ENCODE measurements at regions of chr10 and their contacts with region 1.

Region 1: GRCh38 chr10:13776861-13777311 is 190.1 kb downstream of the PRPF18 start:
- DNase-seq: peak; percentile 61
- H3K4me3 ChIP-seq: no peak overlapping the region
- H3K27ac ChIP-seq: peak overlapping the region; percentile 65
- H3K4me1 ChIP-seq: peaks cover 45% of the 10 kb centered on the region
- H3K27me3 ChIP-seq: no peaks in the 10 kb centered on the region
- CTCF ChIP-seq: no peak

Region 2: DNA sequence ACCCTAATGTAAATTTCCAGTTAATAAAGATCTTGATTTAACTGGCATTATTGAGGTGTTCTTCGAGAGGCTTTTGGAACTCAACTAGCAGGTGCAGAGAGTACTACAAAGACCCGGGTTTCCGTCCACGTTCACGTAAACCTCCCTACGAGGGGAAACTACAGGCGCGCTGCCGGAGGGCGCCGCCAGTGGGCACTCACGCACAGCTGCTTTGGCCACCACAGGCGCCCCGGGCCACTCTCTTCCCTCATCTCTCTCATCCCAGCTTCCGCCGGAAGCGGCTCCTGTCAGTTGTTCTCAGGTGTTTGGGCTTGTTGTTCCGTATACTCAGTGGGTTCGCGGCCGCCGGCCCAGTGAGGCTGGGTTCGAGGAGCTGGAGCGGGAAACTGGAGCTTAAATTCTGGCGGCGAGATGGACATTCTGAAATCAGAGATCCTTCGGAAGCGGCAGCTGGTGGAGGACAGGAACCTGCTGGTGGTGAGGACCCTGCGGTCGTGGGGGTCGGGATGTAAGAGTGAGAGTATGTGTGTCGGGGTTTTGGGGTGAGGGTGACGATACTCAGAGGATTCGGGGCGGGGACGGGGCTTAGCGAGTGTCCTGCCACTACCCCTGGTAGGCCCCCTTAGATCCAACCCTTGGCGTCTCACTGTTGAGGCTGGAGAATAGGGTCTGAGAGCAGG is 190.1 kb before region 1 on chr10 and contains the start of gene PRPF18:
- CTCF ChIA-PET with region 1: no interaction called
- dilution Hi-C with region 1: no loop called
- in situ Hi-C with region 1: no loop called
- intact Hi-C with region 1: loop called (anchors 1 kb)
- DNase-seq: peak; percentile 89
- H3K4me3 ChIP-seq: peak within 1 kb of the TSS; percentile 94 to 96 (median 94)
- H3K27ac ChIP-seq: peak within 1 kb of the TSS; percentile 73
- H3K4me1 ChIP-seq: peaks cover 4% of the 10 kb centered on the region
- H3K27me3 ChIP-seq: no peaks in the 10 kb centered on the region
- CTCF ChIP-seq: peak; percentile 92 to 97
- total RNA-seq, gene PRPF18: 22.4 to 23.0 TPM

Region 3: GRCh38 chr10:13649844-13650521 is 126.9 kb before region 1 on chr10:
- CTCF ChIA-PET with region 1: no interaction called
- dilution Hi-C with region 1: no loop called
- in situ Hi-C with region 1: loop called (anchors 5 kb)
- intact Hi-C with region 1: no loop called
- DNase-seq: no peak
- H3K4me3 ChIP-seq: no peak overlapping the region
- H3K27ac ChIP-seq: no peak overlapping the region
- H3K4me1 ChIP-seq: no peaks in the 10 kb centered on the region
- H3K27me3 ChIP-seq: no peaks in the 10 kb centered on the region
- CTCF ChIP-seq: no peak

Region 4: DNA sequence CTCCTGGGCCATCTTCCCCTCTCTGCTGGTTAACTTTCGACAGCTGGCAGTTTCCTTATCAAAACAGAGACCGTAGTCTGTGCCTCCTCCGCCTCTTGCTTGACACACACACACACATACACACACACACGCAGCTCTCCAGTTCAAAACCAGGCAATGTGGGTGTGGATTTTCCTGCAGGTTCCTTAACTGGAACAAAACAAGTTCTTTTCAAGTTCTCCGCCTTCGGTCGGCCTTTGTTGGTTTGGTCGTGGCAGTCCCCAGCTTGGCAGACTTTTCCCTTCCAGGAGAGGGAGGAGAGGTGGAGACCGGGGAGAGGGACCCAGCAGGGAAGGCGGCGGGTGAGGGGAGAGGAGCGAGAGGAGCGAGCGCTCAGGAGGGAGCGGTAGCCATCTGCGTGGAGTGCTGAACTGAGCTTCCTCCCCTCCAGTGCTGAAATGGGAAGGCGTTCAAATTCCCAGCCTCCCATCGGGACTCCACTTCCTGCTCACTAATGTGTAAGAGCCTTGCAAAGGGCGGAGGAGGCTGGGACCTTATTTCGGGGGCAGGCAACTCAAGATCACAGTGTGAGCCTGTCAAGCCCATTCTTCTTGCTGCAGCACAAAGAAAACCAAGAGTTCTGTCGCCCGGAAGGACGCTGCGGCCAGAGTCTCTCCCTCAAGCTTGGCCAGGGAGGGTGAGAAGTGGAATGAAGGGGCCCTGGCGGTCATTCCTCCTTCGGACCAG is 69.6 kb before region 1 on chr10:
- CTCF ChIA-PET with region 1: no interaction called
- dilution Hi-C with region 1: no loop called
- in situ Hi-C with region 1: loop called in 1 of 2 experiments (anchors 5 kb)
- intact Hi-C with region 1: loop called (anchors 1 kb)
- DNase-seq: peak; percentile 80
- H3K4me3 ChIP-seq: peak overlapping the region; percentile 66 to 83 (median 68)
- H3K27ac ChIP-seq: peak overlapping the region; percentile 11
- H3K4me1 ChIP-seq: peaks cover 29% of the 10 kb centered on the region
- H3K27me3 ChIP-seq: no peaks in the 10 kb centered on the region
- CTCF ChIP-seq: peak in 1 of 2 donors; percentile 1